Activated T-helper 1 cell treated with anti-CD3 and anti-CD28 coated beads, Interleukin-12 subunit alpha, Interleukin-12 subunit beta, Interleukin-2, Interleukin-4 antibody, amounts not matched to agents 30 ng/mL and 10 ng/mL and 1 ng/mL, durations not matched to agents 14 hours and 24 hours and 36 hours (primary cell): ENCODE measurements at regions of chr11 and their contacts with region 1.

Region 1: GRCh38 chr11:19951558-19952115 is 208.6 kb downstream of the DBX1 start:
- DNase-seq: no peak
- H3K4me3 Mint-ChIP-seq: peak overlapping the region; percentile 53
- H3K27ac Mint-ChIP-seq: no peak overlapping the region
- H3K4me1 Mint-ChIP-seq: peaks cover 6% of the 10 kb centered on the region
- H3K27me3 Mint-ChIP-seq: peaks cover 14% of the 10 kb centered on the region

Region 2: DNA sequence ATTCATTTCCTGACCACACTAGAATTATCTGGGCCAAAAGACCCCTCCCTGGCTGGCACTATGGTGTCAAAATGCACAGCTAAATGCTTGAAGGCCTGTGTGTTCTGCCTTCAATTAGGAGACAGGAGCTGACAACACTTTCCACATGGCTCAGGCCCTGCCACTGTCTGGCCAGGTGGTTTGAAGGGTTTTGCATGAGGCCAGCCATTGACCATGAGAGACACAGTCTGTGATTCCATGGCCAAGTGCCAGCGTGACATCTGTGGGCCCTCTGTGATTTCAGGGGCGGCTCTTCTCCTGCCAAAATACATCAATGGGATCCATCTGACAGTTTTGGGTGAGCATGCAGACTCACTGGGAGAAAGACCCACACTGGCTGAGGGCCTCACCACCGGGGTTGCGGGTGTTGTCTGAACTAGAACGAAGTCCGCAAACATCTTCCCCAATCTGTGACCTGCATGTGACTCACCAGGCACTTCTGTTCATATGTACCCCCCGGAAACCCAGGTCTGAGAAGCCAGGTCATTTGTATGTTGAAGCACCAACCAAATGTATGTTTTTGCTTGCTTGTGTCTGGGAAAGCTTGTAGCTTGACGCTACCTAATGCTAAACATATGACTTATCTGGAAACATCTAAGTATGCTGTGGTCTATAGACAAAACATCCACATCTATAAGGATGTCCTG is 259.7 kb before region 1 on chr11:
- intact Hi-C with region 1: no loop called
- DNase-seq: no peak
- H3K4me3 Mint-ChIP-seq: no peak overlapping the region
- H3K27ac Mint-ChIP-seq: no peak overlapping the region
- H3K4me1 Mint-ChIP-seq: no peaks in the 10 kb centered on the region
- H3K27me3 Mint-ChIP-seq: peaks cover 10% of the 10 kb centered on the region

Region 3: DNA sequence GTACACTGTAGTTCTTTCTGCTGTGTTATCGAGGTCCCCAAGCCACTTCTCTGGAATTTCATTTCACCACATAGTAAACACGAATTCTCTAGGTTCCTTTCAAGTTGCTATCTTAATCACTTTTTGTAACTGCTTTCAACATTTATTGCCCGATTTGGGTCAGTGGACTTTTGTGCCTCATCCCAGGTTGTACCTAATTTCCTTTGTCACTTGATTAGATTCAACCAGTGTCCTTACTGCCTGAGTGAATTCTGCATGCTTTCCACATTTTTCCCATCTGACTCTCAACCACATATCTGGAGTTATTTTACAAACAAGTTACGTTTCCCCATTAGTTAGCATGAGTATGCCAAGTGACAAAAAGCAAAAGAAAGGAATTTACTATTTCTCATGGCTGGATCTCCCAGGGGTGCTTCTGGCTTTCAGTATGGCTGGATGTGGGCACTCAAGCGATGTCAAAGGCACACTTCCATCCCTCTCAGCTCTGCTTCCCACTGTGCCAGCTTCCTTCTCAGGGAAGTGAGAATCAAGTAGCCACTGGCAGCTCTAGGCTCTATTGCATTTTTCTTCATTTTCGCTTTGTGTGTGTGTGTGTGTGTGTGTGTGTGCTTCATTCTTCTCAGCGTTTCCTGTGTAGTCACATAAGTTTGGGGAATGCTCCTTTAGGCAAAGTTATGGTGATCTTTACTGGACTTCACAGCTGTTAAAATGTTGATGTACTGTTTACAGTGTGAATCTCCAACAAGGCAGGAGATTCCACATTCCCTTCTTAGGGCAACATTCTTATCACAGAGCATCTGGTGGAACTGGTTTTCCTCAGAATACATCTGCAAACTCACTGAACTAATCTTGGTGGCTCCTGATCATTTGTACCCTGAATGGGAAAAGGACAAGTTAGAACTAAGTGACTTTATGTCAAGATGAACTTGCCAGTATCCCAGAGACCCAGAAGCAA is 79.8 kb after region 1 on chr11:
- intact Hi-C with region 1: no loop called
- DNase-seq: no peak
- H3K4me3 Mint-ChIP-seq: no peak overlapping the region
- H3K27ac Mint-ChIP-seq: no peak overlapping the region
- H3K4me1 Mint-ChIP-seq: no peaks in the 10 kb centered on the region
- H3K27me3 Mint-ChIP-seq: peaks cover 8% of the 10 kb centered on the region

Region 4: DNA sequence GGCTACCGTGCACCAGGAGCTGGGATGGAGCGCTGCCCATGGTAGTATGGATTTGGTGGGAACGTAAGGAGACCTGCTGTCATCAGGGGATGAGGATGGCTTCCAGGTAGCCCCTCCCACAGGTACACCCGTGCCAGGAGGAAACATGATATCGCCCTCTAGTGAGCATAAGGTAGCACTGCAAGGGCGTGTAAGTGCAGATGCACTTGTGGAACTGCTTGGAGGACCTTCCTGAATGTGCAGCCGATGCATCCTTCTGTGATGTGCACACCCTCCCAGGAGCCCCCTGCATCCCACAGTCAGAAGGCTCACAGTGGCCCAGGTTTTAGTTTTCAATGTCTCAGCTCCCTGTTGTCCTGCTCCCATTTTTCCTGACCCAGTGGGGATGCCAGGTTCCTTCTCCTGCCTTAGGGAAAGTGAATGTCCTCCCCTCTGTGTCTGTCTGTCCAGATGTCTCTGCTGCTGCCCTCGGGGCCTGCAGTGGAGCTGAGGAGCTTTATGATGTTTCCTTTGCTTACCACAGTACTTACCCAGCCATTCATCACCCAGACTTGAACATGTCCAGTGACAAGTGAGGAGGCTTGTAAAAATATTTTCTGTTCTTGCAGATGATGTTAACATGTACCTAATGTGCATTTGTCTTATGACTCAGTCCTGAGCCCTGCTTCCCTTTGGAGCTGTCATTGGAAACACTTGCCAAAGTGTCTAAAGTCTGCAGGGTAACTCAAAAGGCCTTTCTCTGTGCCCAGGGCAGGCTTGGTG is 159.5 kb after region 1 on chr11:
- intact Hi-C with region 1: loop called (anchors 1 kb)
- DNase-seq: peak; percentile 14
- H3K4me3 Mint-ChIP-seq: no peak overlapping the region
- H3K27ac Mint-ChIP-seq: no peak overlapping the region
- H3K4me1 Mint-ChIP-seq: no peaks in the 10 kb centered on the region
- H3K27me3 Mint-ChIP-seq: no peaks in the 10 kb centered on the region